ENCODE measurements at regions of chr1 and their contacts with region 1.

Region 1: DNA sequence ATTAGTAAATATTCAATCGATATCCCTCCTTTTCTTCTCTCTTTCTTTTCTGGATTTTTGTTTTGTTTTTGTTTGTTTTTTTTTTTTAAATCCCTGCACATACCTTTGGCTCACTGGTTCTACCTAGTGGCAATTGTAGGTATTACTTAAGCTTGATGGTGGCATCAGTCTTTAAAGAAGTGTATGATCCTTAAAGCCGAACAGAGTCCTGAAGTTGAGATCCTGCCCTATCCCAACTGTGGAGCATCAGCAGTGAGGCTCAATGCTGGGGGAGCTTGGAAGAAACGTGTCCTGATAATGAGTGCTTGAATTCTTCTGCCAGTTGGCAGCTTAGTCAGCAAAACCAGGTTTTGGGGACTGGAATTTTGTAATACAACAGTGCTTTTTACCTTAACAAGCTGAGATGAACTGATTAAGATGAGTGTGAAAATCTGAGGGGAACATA is 60.8 kb downstream of the FASLG start:
- DNase-seq: no peak
- ATAC-seq: no peak
- H3K4me3 Mint-ChIP-seq: no peak overlapping the region
- H3K27ac Mint-ChIP-seq: peak overlapping the region; percentile 0
- H3K4me1 Mint-ChIP-seq: peaks cover 47% of the 10 kb centered on the region
- H3K27me3 Mint-ChIP-seq: no peaks in the 10 kb centered on the region

Region 2: GRCh38 chr1:172545396-172546004 is 174.2 kb before region 1 on chr1:
- CTCF ChIA-PET with region 1: interaction called, 10 read pairs
- POLR2A ChIA-PET with region 1: no interaction called
- DNase-seq: no peak
- ATAC-seq: no peak
- H3K4me3 Mint-ChIP-seq: no peak overlapping the region
- H3K27ac Mint-ChIP-seq: no peak overlapping the region
- H3K4me1 Mint-ChIP-seq: peaks cover 24% of the 10 kb centered on the region
- H3K27me3 Mint-ChIP-seq: no peaks in the 10 kb centered on the region

Region 3: DNA sequence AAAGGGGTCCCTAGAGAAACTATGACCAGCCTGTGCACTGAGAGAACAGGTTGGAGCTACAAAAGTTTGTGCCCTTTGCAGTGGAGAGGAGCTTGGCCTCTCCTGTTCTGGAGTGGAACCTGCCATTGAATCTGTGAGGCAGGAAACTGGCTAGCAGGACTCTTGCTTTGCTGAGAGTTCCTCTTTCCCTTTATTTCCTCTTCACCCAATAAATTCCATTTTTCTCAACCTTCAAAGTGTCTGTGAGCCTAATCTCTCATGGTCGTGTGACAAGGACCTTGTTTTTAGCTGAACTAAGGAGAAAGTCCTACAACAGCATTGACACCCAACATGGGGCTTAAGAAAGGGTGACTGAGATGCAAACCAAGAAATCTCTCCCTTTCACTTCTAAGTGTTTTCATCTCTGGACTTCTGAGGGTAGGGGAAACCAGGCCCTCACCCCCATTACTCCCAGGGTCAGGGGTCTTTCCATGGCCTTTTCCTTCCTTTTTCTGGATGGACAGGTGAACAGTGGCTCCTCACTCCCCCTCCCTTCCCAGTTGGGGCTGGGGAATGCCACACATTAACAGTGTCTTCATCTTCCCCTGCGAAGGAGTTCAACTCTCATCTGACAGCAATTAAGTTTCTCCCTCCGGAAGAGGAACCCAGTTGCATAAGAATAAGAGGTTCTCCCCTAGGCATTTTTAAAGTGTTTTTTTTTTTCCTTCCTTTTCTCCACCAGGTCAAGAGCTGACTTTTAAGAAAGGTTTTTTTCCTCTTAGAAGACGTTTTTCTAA is 103.3 kb before region 1 on chr1:
- CTCF ChIA-PET with region 1: interaction called, 174 read pairs
- POLR2A ChIA-PET with region 1: no interaction called
- DNase-seq: no peak
- ATAC-seq: no peak
- H3K4me3 Mint-ChIP-seq: no peak overlapping the region
- H3K27ac Mint-ChIP-seq: no peak overlapping the region
- H3K4me1 Mint-ChIP-seq: peaks cover 10% of the 10 kb centered on the region
- H3K27me3 Mint-ChIP-seq: no peaks in the 10 kb centered on the region

Region 4: GRCh38 chr1:172662464-172663109 is 57.1 kb before region 1 on chr1:
- CTCF ChIA-PET with region 1: interaction called, 81 read pairs
- POLR2A ChIA-PET with region 1: interaction called, 7 read pairs
- DNase-seq: peak; percentile 93
- ATAC-seq: peak; percentile 80
- H3K4me3 Mint-ChIP-seq: peak overlapping the region; percentile 81
- H3K27ac Mint-ChIP-seq: peak overlapping the region; percentile 83
- H3K4me1 Mint-ChIP-seq: peaks cover 81% of the 10 kb centered on the region
- H3K27me3 Mint-ChIP-seq: no peaks in the 10 kb centered on the region

Region 5: DNA sequence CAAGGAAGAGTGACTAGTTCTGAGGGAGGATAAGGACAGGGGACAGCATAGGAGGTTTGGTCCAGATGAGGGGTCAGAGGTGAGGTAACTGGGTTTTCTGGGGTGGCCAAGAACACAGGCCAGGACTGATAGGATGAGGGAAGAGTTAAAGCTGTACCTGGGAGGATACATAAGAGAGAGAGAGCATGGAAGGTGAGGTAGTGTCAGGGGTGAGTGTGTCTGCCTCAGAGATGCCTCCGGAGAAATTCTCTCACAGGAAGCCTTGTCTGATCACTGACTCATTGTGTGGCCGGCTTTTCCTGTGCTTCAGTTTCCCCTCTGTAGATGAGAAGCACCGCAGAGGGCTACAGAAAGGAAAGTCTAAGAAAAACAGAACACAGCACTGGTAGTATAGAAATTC is 20.6 kb before region 1 on chr1:
- CTCF ChIA-PET with region 1: interaction called, 19 read pairs
- POLR2A ChIA-PET with region 1: no interaction called
- DNase-seq: peak; percentile 86
- ATAC-seq: peak; percentile 85
- H3K4me3 Mint-ChIP-seq: peak overlapping the region; percentile 55
- H3K27ac Mint-ChIP-seq: peak overlapping the region; percentile 96
- H3K4me1 Mint-ChIP-seq: no peaks in the 10 kb centered on the region
- H3K27me3 Mint-ChIP-seq: no peaks in the 10 kb centered on the region

Region 6: DNA sequence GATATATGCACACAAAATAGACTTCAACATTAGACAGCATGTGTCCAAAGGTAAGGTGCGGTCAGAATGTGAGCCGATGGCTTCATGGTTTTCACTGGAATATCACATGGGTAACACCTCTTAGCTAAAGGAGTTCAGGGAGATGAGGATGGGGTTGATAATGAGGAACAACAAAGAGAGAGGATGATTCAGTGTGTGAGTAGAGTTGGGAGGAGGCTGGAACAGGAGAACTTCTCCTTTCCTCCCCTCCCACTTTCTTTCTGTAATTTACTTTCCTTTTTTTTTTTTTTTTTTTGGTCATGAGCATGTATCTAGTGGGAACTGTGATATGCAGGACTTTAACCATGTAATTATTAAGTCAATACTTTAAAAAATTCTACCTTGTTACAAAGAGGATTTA is 38.5 kb after region 1 on chr1:
- CTCF ChIA-PET with region 1: no interaction called
- POLR2A ChIA-PET with region 1: no interaction called
- DNase-seq: no peak
- ATAC-seq: no peak
- H3K4me3 Mint-ChIP-seq: no peak overlapping the region
- H3K27ac Mint-ChIP-seq: no peak overlapping the region
- H3K4me1 Mint-ChIP-seq: peaks cover 37% of the 10 kb centered on the region
- H3K27me3 Mint-ChIP-seq: no peaks in the 10 kb centered on the region

Region 7: GRCh38 chr1:172948457-172948856 is 228.7 kb after region 1 on chr1:
- CTCF ChIA-PET with region 1: no interaction called
- POLR2A ChIA-PET with region 1: no interaction called
- DNase-seq: peak; percentile 23
- ATAC-seq: peak; percentile 28
- H3K4me3 Mint-ChIP-seq: no peak overlapping the region
- H3K27ac Mint-ChIP-seq: no peak overlapping the region
- H3K4me1 Mint-ChIP-seq: peaks cover 33% of the 10 kb centered on the region
- H3K27me3 Mint-ChIP-seq: peaks cover 4% of the 10 kb centered on the region